ENCODE measurements at regions of chr1 and their contacts with region 1.

Region 1: GRCh38 chr1:62951428-62951827 is 167.5 kb downstream of the ATG4C start:
- DNase-seq: no peak
- ATAC-seq: no peak
- H3K4me3 ChIP-seq: no peak overlapping the region
- H3K27ac ChIP-seq: no peak overlapping the region
- H3K4me1 ChIP-seq: no peaks in the 10 kb centered on the region
- H3K27me3 ChIP-seq: peaks cover 87% of the 10 kb centered on the region
- CTCF ChIP-seq: no peak

Region 2: GRCh38 chr1:62823556-62823955 is 127.9 kb before region 1 on chr1:
- CTCF ChIA-PET with region 1: interaction called, 13 read pairs
- POLR2A ChIA-PET with region 1: no interaction called
- intact Hi-C with region 1: no loop called
- DNase-seq: no peak
- ATAC-seq: no peak
- H3K4me3 ChIP-seq: no peak overlapping the region
- H3K27ac ChIP-seq: no peak overlapping the region
- H3K4me1 ChIP-seq: no peaks in the 10 kb centered on the region
- H3K27me3 ChIP-seq: no peaks in the 10 kb centered on the region
- CTCF ChIP-seq: no peak

Region 3: DNA sequence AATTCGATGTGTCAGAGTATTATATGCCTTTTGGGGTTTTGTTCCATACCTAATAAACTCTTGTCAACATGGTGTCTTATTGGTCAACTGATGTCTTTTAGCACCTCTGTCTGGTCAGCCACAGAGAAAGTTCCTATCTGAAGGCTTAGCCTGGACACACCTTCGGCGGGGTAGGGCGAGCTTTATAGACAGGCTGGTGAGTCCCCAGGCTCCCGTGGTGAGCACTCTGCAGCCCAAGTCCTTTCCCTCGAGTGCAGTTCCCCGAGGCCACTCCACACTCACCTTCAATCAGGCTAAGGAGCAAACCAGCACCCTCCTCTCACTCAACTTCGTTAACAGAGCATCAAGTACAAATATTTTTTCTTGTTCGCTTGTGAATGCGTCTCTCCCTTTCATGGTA is 33.6 kb before region 1 on chr1:
- CTCF ChIA-PET with region 1: no interaction called
- POLR2A ChIA-PET with region 1: no interaction called
- intact Hi-C with region 1: no loop called
- DNase-seq: no peak
- ATAC-seq: no peak
- H3K4me3 ChIP-seq: no peak overlapping the region
- H3K27ac ChIP-seq: no peak overlapping the region
- H3K4me1 ChIP-seq: no peaks in the 10 kb centered on the region
- H3K27me3 ChIP-seq: peaks cover 87% of the 10 kb centered on the region
- CTCF ChIP-seq: no peak

Region 4: GRCh38 chr1:63189677-63190076 is 238.2 kb after region 1 on chr1:
- CTCF ChIA-PET with region 1: no interaction called
- POLR2A ChIA-PET with region 1: no interaction called
- intact Hi-C with region 1: no loop called
- DNase-seq: no peak
- ATAC-seq: no peak
- H3K4me3 ChIP-seq: no peak overlapping the region
- H3K27ac ChIP-seq: no peak overlapping the region
- H3K4me1 ChIP-seq: no peaks in the 10 kb centered on the region
- H3K27me3 ChIP-seq: peaks cover 18% of the 10 kb centered on the region; the same call in 1 of the 2 replicates
- CTCF ChIP-seq: peak; percentile 41; the same call in 1 of the 2 replicates

Region 5: GRCh38 chr1:63264161-63264560 is 312.7 kb after region 1 on chr1:
- CTCF ChIA-PET with region 1: no interaction called
- POLR2A ChIA-PET with region 1: no interaction called
- intact Hi-C with region 1: no loop called
- DNase-seq: no peak
- ATAC-seq: no peak
- H3K4me3 ChIP-seq: no peak overlapping the region
- H3K27ac ChIP-seq: no peak overlapping the region
- H3K4me1 ChIP-seq: peaks cover 3% of the 10 kb centered on the region
- H3K27me3 ChIP-seq: 0 out of 2 replicates have a peak, but pooled peaks cover 2% of the 10 kb centered on the region
- CTCF ChIP-seq: no peak

Measured in PC-3 (cell line).